ENCODE measurements at regions of chr21 and their contacts with region 1.

Region 1: GRCh38 chr21:35051287-35051818 is 2.3 kb upstream of the RUNX1 start:
- DNase-seq: peak; percentile 91
- H3K4me3 Mint-ChIP-seq: peak overlapping the region; percentile 16
- H3K27ac Mint-ChIP-seq: peak overlapping the region; percentile 97
- H3K4me1 Mint-ChIP-seq: peaks cover 59% of the 10 kb centered on the region
- H3K27me3 Mint-ChIP-seq: no peaks in the 10 kb centered on the region

Region 2: GRCh38 chr21:34745557-34746255 is 305.6 kb before region 1 on chr21:
- CTCF ChIA-PET with region 1: interaction called, 3 read pairs
- intact Hi-C with region 1: loop called (anchors 5 kb)
- DNase-seq: peak; percentile 74
- H3K4me3 Mint-ChIP-seq: peak overlapping the region; percentile 47
- H3K27ac Mint-ChIP-seq: peak overlapping the region; percentile 54
- H3K4me1 Mint-ChIP-seq: peaks cover 4% of the 10 kb centered on the region
- H3K27me3 Mint-ChIP-seq: no peaks in the 10 kb centered on the region

Region 3: GRCh38 chr21:34986561-34987500 is 64.5 kb before region 1 on chr21:
- CTCF ChIA-PET with region 1: interaction called, 22 read pairs
- intact Hi-C with region 1: loop called (anchors 1 kb)
- DNase-seq: peak; percentile 92
- H3K4me3 Mint-ChIP-seq: peak overlapping the region; percentile 71
- H3K27ac Mint-ChIP-seq: peak overlapping the region; percentile 89
- H3K4me1 Mint-ChIP-seq: peaks cover 94% of the 10 kb centered on the region
- H3K27me3 Mint-ChIP-seq: no peaks in the 10 kb centered on the region

Region 4: DNA sequence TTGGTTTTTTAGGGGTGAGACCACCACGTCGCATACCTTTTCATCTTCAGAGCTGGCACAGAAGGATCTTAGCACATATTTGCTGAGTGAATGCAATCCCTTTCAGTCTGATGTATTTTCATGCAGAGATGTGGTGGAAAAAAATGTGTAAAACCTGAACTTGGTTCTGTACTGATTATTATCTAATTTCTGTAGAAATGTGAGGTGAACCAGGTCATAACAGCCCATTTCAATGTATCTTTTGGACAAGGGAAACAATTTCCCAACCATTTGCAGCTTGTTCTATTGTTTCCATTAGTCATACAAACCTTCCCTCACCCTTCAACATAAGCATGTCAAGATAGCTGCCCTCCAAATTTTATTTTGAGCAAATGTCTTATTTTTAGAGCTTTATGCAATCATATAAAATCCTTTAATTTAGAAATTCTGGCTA is 44.5 kb after region 1 on chr21:
- CTCF ChIA-PET with region 1: interaction called, 3 read pairs
- intact Hi-C with region 1: loop called (anchors 1 kb)
- DNase-seq: no peak
- H3K4me3 Mint-ChIP-seq: no peak overlapping the region
- H3K27ac Mint-ChIP-seq: no peak overlapping the region
- H3K4me1 Mint-ChIP-seq: peaks cover 32% of the 10 kb centered on the region
- H3K27me3 Mint-ChIP-seq: no peaks in the 10 kb centered on the region

Region 5: DNA sequence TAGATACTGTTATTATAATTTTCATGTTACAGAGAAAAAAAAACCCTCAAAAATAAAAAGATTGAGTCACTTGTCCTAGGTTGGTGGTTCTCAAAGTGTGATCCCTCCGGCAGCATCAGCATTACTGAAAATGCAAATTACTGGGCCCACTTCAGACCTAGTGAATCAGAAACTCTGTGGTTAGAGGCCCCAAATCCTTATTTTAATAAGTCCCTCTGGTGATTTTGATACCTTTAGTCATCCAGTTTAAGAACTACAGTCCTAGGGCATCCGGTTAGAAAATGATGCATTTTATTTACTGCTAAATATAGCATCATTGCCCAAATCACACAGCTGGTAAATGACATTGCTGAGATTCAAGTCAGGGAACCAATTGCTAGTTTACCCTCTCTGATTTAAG is 201.5 kb after region 1 on chr21:
- CTCF ChIA-PET with region 1: interaction called, 4 read pairs
- intact Hi-C with region 1: loop called (anchors 1 kb)
- DNase-seq: peak; percentile 63
- H3K4me3 Mint-ChIP-seq: no peak overlapping the region
- H3K27ac Mint-ChIP-seq: no peak overlapping the region
- H3K4me1 Mint-ChIP-seq: peaks cover 29% of the 10 kb centered on the region
- H3K27me3 Mint-ChIP-seq: no peaks in the 10 kb centered on the region

Region 6: GRCh38 chr21:35528116-35529042 is 477.0 kb after region 1 on chr21:
- CTCF ChIA-PET with region 1: no interaction called
- intact Hi-C with region 1: loop called (anchors 2 kb)
- DNase-seq: peak; percentile 80
- H3K4me3 Mint-ChIP-seq: peak overlapping the region; percentile 82
- H3K27ac Mint-ChIP-seq: peak overlapping the region; percentile 87
- H3K4me1 Mint-ChIP-seq: peaks cover 46% of the 10 kb centered on the region
- H3K27me3 Mint-ChIP-seq: no peaks in the 10 kb centered on the region